Panc1 (cell line): ENCODE measurements at regions of chr2 and their contacts with region 1.

Region 1: DNA sequence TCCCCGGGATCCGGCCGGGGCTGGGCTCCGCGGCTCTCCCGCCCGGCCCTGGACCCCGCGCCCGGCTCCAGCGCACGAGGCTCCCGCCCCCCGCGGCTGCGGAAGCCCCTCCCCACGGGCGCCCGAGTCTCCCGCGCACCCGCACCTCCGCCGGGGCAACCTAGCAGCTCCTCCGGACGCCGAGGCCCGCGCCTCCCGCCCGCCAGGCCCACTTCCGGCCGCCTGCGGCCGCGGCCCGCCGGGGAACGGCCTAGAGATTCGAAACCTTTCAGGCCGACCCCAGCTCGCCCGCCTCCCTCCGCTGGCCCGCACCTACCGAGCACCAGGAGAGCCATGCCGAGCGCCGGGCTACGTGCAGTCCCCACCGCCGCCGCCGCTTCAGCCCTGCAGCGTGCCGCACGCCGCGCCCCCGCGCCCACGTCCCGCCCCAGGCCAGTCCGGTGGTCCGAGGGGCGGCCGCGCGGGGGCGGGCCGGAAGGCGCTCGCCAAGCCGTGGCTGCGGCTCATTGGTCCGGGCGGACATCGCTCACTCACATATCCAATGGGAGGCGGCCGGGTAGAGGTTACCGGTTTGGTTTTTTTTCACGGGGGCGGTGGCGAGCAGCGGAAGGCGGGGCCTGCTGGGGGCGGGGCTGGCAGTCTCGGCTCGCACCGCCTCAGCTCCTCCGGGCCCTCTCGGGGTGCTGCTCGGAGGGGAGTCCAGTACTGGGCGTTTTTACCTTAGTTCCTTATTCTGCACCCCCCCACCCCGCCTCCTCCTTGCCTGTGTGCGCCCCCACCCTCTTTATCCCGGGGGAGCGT is at the start of gene PDIA6:
- DNase-seq: peak; percentile 50
- ATAC-seq: peak; percentile 99
- H3K4me3 ChIP-seq: peak within 1 kb of the TSS; percentile 60 to 88
- H3K27ac ChIP-seq: peak within 1 kb of the TSS; percentile 89
- H3K4me1 ChIP-seq: peaks cover 20% of the 10 kb centered on the region
- H3K27me3 ChIP-seq: no peaks in the 10 kb centered on the region
- CTCF ChIP-seq: no peak
- total RNA-seq, gene PDIA6: 271 TPM

Region 2: DNA sequence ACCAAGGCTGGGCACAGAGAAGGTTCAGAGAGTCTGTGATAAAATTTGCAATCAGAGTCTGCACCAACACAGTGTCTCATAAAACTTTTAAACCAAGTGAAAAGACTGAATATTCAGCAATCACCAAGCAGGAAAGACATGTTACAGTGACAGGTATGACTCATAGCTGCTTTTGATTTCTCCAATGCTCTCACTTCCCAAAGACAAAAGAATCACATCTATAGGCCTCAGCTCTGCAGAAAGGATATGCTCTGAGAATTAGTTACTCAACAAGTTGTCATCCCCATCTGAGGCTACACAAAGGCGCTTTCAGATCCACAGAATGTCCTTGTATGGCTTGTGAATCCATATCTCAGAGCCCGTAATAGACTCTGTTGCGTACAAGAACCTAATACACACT is 191.6 kb after region 1 on chr2:
- CTCF ChIA-PET with region 1: no interaction called
- POLR2A ChIA-PET with region 1: interaction called, 12 read pairs
- in situ Hi-C with region 1: no loop called
- intact Hi-C with region 1: no loop called
- DNase-seq: no peak
- ATAC-seq: no peak
- H3K4me3 ChIP-seq: no peak overlapping the region
- H3K27ac ChIP-seq: no peak overlapping the region
- H3K4me1 ChIP-seq: no peaks in the 10 kb centered on the region
- H3K27me3 ChIP-seq: no peaks in the 10 kb centered on the region
- CTCF ChIP-seq: no peak

Region 3: DNA sequence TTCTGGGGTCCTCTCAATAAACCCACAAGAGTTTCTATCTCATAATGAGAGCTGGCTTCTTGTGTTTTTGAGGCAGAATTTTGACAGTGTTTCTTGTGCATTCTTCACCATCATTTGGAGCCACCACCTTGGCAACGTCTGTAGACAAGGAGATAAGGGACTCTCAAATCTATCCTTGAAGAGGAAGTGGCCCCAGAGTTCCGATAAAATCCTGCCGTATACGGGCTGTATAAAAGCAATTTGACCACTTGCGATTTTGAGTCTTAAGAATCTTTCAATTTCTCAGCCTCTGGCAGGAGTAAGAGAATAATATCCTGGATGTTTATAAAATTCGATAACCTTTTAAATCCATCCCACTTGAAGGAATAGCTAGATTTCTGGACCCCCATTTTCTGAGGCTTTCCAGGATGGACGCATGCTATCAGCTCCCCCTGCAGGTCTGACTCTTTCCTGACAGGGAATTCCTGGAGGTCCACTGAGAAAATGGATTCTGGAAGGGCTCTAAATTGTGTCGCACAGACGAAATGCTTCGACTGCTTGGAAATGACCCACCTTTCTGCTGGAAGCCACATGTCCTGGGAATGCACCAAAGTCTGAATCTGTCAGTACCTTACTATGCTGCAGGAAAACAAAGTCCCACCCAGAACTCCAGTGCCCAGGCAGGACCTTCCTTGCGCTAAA is 599.3 kb after region 1 on chr2:
- CTCF ChIA-PET with region 1: no interaction called
- POLR2A ChIA-PET with region 1: no interaction called
- in situ Hi-C with region 1: no loop called
- intact Hi-C with region 1: no loop called
- DNase-seq: peak; percentile 30
- ATAC-seq: peak; percentile 84
- H3K4me3 ChIP-seq: peak overlapping the region; percentile 40 to 43
- H3K27ac ChIP-seq: peak overlapping the region; percentile 31; the same call in 1 of the 2 replicates
- H3K4me1 ChIP-seq: peaks cover 9% of the 10 kb centered on the region; the same call in 1 of the 2 replicates
- H3K27me3 ChIP-seq: no peaks in the 10 kb centered on the region
- CTCF ChIP-seq: peak; percentile 91